Psoas muscle (tissue), 8 donors: ENCODE measurements at regions of chr17 and their contacts with region 1.

Region 1: DNA sequence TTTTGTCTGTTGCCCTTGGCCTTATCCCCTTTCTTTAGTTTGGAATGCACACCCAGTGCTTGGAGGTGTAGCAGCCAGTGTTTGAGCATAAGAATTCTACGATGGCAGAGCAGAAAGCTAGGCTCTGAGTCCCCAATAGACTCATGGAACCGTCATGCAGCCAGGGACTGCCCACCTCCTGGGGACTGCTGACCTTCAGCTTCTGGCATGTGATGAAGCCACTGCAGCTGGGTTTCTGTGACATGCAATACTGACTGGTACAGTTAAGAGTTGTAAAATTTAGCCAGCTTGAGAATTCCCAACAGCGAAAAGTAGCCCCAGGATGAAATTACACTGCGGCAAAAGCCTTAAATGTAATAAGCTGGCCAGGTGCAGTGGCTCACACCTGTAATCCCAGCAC is 9.0 kb upstream of the MAP3K14 start:
- DNase-seq: no peak
- ATAC-seq: peak in 3 of 4 donors; percentile 41 to 55 (median 50)
- H3K4me3 ChIP-seq: no peak overlapping the region
- H3K27ac ChIP-seq: no peak overlapping the region
- H3K4me1 ChIP-seq: peaks cover 7% of the 10 kb centered on the region
- H3K27me3 ChIP-seq: no peaks in the 10 kb centered on the region
- CTCF ChIP-seq: no peak

Region 2: GRCh38 chr17:45371414-45372327 is 45.9 kb after region 1 on chr17:
- intact Hi-C with region 1: loop called in 1 of 2 experiments (anchors 2 kb)
- DNase-seq: peak; percentile 90 to 92
- ATAC-seq: peak; percentile 95 to 98 (median 96)
- H3K4me3 ChIP-seq: peak overlapping the region; percentile 51
- H3K27ac ChIP-seq: peak overlapping the region; percentile 81
- H3K4me1 ChIP-seq: peaks cover 34% of the 10 kb centered on the region
- H3K27me3 ChIP-seq: no peaks in the 10 kb centered on the region
- CTCF ChIP-seq: no peak